Heart left ventricle (tissue), 16 donors: ENCODE measurements at regions of chr18 and their contacts with region 1.

Region 1: GRCh38 chr18:58429442-58429841 is 199.4 kb downstream of the ALPK2 start:
- DNase-seq: no peak
- ATAC-seq: peak in 1 of 4 donors; percentile 56
- H3K4me3 ChIP-seq: no peak overlapping the region
- H3K27ac ChIP-seq: no peak overlapping the region
- H3K4me1 ChIP-seq: no peaks in the 10 kb centered on the region
- H3K27me3 ChIP-seq: no peaks in the 10 kb centered on the region
- CTCF ChIP-seq: no peak
- POLR2A ChIP-seq: no peak

Region 2: DNA sequence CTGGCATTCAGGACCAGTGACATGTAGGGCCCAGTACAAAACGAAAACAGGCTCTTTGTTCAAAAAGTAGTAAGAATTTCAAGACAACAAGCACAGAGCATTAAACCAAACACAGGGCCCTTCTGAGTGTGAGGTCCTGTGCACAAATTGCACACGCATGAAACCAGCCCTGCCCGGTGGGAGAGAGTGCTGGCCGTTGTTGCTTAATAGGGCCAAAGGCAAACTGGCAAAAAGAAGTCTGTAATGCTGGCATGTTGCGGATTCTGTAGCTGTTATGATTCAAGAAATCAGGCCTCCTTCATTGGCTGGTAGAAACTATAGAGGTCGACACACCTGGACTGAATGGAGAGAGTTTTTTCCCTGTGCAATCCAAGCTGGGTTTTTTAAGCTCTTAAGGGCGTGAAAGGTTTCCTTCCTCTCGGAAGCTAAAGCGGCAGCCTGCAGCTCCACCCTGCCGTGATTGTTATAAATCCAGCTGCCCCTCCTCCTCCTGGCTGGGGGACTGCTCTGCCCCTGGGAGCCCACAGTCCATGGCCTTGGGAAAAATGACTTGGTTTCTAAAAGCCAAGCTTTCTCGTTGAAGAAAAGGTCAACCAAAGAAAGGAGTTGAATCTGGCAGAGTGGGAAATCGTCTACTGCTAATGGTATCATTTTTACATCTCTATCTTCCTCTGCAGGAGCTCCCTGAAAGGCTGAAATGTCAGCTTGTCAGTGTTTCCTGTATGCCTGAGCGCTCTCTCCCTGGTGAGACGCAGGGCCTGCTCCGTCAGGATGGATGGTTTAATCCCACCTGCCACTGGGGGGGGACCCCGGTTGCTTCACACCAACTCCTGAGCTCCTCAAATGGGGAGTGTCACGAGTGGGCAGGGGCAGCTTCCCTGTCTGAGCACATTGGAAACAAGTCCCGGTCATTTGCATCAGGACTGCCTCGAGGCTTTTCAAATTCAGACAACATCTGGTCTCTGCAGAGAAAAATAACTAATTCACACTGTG is 55.8 kb after region 1 on chr18:
- intact Hi-C with region 1: loop called in 1 of 10 experiments (anchors 5 kb)
- DNase-seq: no peak
- ATAC-seq: peak in 3 of 4 donors; percentile 48 to 63 (median 48)
- H3K4me3 ChIP-seq: no peak overlapping the region
- H3K27ac ChIP-seq: no peak overlapping the region
- H3K4me1 ChIP-seq: peaks cover 0 to 9% (median 0%) of the 10 kb centered on the region in 12 donors
- H3K27me3 ChIP-seq: no peaks in the 10 kb centered on the region
- CTCF ChIP-seq: peak in 2 of 12 donors; percentile 8 to 15
- POLR2A ChIP-seq: no peak